ENCODE measurements at regions of chr7 and their contacts with region 1.

Region 1: GRCh38 chr7:128092221-128092620 is 61.0 kb upstream of the LRRC4 start:
- DNase-seq: no peak
- H3K4me3 ChIP-seq: no peak overlapping the region
- H3K27ac ChIP-seq: no peak overlapping the region
- H3K4me1 ChIP-seq: no peaks in the 10 kb centered on the region
- H3K27me3 ChIP-seq: no peaks in the 10 kb centered on the region
- CTCF ChIP-seq: no peak

Region 2: DNA sequence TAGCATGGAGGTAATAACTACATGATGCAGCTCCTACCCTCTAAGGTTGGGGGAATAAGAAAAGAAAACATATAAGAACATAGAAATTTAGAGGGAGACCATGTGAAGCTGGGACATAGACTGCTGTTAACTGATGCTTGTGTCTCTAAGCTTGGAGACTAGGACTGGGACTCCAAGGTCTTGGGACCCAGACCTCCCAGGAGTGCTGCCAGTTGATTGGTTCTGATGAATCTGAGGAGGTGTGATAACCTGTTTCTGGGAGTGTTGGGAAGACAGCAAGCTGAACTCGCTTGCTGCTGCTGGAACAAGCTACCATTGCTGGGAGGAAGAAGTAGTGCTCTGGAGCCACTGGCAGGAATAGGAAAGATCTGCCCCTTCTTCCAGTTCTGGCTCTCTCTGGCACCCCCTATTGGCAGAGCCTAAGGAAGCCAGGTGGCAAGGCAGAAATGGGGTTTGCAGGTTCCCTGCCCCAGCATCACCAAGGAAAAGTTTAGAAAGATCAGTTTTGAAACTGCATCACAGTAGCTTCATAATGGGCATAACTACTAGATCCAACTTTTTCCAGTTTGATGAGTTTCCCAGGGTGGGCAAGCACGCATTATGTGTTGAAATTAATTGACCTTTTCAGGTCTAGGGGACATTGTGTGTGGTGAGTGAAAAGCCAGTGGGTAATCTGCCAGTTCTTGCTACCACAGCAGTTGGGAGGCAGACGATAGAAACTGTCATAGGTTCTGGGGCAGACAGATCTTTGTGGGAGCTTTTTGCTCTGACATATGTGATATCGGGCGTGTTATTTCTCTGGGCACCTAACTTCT is 299.5 kb before region 1 on chr7:
- CTCF ChIA-PET with region 1: no interaction called
- POLR2A ChIA-PET with region 1: no interaction called
- intact Hi-C with region 1: no loop called
- DNase-seq: peak; percentile 43
- H3K4me3 ChIP-seq: no peak overlapping the region
- H3K27ac ChIP-seq: no peak overlapping the region
- H3K4me1 ChIP-seq: peaks cover 43% of the 10 kb centered on the region
- H3K27me3 ChIP-seq: no peaks in the 10 kb centered on the region
- CTCF ChIP-seq: peak; percentile 67

Region 3: DNA sequence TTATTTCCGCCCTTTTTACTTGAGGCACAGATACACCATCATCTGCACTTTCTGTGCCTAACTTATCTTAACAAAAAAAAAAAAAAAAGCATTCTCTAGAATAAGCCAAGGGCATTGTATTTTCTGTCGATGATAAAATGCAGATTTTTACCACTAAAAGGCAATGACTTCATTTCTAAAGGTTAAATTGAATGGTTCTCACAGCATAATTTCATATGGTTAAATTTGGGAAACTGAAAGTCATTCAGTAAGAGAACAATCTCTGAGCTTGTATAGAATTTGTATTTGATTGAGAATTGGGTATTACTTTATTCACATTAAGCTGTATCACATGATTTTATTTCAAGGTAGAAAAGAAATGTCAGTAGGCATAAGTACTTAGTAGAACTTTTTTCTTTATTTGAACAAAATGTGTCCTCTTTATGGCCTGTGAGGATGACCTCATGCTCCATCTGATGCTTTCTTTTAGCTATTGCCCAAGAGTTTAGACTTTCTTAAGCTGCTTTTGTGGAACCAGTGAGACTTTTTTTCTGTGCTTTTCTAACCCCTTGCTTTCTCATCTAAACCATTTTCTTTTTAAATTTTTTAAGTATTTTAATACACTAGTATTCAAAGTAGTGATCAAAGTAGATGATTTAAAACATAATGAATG is 171.3 kb before region 1 on chr7:
- CTCF ChIA-PET with region 1: no interaction called
- POLR2A ChIA-PET with region 1: no interaction called
- intact Hi-C with region 1: no loop called
- DNase-seq: no peak
- H3K4me3 ChIP-seq: no peak overlapping the region
- H3K27ac ChIP-seq: no peak overlapping the region
- H3K4me1 ChIP-seq: no peaks in the 10 kb centered on the region
- H3K27me3 ChIP-seq: no peaks in the 10 kb centered on the region
- CTCF ChIP-seq: no peak

Region 4: GRCh38 chr7:128031901-128032604 is 60.2 kb before region 1 on chr7:
- CTCF ChIA-PET with region 1: no interaction called
- POLR2A ChIA-PET with region 1: no interaction called
- intact Hi-C with region 1: no loop called
- DNase-seq: peak; percentile 92
- H3K4me3 ChIP-seq: peak overlapping the region; percentile 65
- H3K27ac ChIP-seq: no peak overlapping the region
- H3K4me1 ChIP-seq: peaks cover 20% of the 10 kb centered on the region
- H3K27me3 ChIP-seq: no peaks in the 10 kb centered on the region
- CTCF ChIP-seq: peak; percentile 41

Region 5: GRCh38 chr7:128066861-128067260 is 25.4 kb before region 1 on chr7:
- CTCF ChIA-PET with region 1: no interaction called
- POLR2A ChIA-PET with region 1: interaction called, 10 read pairs
- intact Hi-C with region 1: no loop called
- DNase-seq: no peak
- H3K4me3 ChIP-seq: no peak overlapping the region
- H3K27ac ChIP-seq: no peak overlapping the region
- H3K4me1 ChIP-seq: no peaks in the 10 kb centered on the region
- H3K27me3 ChIP-seq: no peaks in the 10 kb centered on the region
- CTCF ChIP-seq: no peak

Measured in A673 (cell line).